ENCODE measurements at regions of chr5 and their contacts with region 1.

Region 1: DNA sequence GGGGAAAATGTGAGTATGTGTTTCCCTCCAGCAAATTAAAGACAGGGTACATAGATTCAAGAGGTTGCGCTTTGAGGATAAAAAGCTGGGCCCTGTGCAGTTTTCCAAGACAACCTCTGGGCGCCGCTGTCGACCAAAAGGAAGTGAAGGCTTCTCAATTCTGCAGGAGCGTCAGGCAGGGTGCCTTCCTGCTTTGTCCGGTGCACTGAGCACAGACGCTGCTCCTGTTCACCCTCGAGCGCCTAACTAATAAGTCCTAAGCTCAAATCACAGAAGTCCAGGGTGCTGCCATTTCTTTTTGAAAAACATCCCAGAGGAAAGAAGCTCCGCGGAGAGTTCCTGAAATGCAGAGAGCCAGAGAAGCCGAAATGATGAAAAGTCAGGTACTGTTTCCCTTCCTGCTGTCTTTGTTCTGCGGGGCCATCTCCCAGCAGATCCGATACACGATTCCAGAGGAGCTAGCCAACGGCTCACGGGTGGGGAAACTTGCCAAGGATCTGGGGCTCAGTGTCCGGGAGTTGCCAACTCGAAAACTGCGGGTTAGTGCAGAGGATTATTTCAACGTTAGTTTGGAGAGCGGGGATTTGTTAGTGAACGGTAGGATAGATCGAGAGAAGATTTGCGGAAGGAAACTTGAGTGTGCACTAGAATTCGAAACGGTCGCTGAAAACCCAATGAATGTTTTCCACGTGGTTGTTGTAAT is at the start of gene PCDHGB1:
- DNase-seq: peak; percentile 38
- ATAC-seq: peak; percentile 57 to 66
- total RNA-seq, gene PCDHGB1: 3.0 to 3.2 TPM

Region 2: DNA sequence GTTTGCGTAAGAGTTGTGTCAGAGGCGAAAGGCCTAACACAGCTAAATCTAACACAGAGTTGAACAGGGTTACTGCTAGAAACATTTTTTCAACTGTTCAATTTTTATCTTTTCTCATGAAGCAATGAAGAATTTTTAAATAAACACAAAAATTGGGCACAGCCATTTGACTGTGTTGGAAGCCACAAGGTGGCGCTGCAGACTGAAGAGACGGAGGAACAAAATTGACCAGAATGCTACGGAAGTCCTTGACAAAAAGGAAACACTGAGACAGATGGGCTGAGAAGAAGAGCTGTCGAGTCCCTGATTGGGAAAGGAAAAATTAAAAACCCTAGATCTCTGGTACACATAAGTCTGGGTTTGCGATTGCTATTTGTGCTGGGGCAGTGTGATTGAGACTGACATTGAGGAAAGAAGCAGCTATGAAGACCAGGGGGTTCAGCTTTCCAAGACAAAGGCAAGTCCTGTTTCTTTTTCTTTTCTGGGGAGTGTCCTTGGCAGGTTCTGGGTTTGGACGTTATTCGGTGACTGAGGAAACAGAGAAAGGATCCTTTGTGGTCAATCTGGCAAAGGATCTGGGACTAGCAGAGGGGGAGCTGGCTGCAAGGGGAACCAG is 163.1 kb before region 1 on chr5 and contains the start of gene PCDHB9:
- intact Hi-C with region 1: no loop called
- DNase-seq: no peak
- ATAC-seq: no peak
- total RNA-seq, gene PCDHB9: 2.5 to 4.3 TPM

Region 3: GRCh38 chr5:141199359-141200235 is 150.5 kb before region 1 on chr5 and contains the start of gene PCDHB11:
- intact Hi-C with region 1: loop called in 1 of 2 experiments (anchors 10 kb)
- DNase-seq: no peak
- ATAC-seq: no peak
- total RNA-seq, gene PCDHB11: 1.8 to 3.3 TPM

Region 4: GRCh38 chr5:141298376-141298775 is 51.7 kb before region 1 on chr5:
- intact Hi-C with region 1: no loop called
- DNase-seq: no peak
- ATAC-seq: no peak

Region 5: GRCh38 chr5:141402553-141403260 is 52.6 kb after region 1 on chr5 and contains the start of gene PCDHGA9:
- intact Hi-C with region 1: loop called in 1 of 2 experiments (anchors 10 kb)
- DNase-seq: no peak
- ATAC-seq: no peak
- total RNA-seq, gene PCDHGA9: 3.6 to 4.0 TPM